Activated T-helper 1 cell treated with anti-CD3 and anti-CD28 coated beads, Interleukin-12 subunit alpha, Interleukin-12 subunit beta, Interleukin-2, Interleukin-4 antibody, amounts not matched to agents 30 ng/mL and 10 ng/mL and 1 ng/mL, durations not matched to agents 14 hours and 24 hours and 36 hours (primary cell): ENCODE measurements at regions of chrX and their contacts with region 1.

Region 1: DNA sequence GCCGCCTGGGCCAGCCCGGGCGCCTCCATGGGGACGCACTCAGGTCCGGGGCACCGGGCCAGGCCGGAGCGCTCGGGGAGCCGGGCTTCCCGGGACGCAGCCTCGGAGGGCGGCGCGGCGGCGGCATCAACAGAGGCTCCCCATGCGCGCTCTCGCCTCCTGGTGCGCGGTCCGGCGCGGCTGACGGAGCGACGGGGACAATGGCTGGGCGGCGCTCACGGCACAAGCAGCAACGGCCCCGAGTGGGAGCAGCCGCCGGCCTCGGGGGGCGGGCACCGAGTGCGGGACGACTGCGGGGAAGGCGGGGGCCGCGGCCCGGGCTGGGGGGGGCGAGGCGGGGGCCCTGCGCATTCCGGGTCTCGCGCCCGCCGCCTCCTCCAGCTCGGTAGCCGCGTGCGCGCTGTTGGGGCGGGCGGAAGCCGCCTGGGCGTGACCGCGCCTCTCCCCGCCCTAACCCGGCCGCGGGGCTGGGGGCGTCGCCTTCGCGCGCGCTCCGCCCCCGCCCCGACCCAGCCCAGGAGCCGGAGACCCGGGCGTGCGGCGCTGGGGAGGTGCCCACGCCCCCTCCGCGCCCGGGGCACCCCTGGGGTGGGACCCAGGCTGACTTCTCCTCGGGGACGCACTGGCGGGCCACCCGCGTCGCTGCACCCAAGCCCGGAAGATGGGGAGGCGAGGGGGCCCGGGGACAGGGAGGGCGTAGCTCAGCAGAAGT is at the start of gene PRKX:
- DNase-seq: peak; percentile 71
- H3K4me3 Mint-ChIP-seq: peak within 1 kb of the TSS; percentile 100
- H3K27ac Mint-ChIP-seq: peak within 1 kb of the TSS; percentile 99
- H3K4me1 Mint-ChIP-seq: peaks cover 2% of the 10 kb centered on the region
- H3K27me3 Mint-ChIP-seq: no peaks in the 10 kb centered on the region
- total RNA-seq, gene PRKX: 72.2 and 80.9 TPM in 2 replicates

Region 2: DNA sequence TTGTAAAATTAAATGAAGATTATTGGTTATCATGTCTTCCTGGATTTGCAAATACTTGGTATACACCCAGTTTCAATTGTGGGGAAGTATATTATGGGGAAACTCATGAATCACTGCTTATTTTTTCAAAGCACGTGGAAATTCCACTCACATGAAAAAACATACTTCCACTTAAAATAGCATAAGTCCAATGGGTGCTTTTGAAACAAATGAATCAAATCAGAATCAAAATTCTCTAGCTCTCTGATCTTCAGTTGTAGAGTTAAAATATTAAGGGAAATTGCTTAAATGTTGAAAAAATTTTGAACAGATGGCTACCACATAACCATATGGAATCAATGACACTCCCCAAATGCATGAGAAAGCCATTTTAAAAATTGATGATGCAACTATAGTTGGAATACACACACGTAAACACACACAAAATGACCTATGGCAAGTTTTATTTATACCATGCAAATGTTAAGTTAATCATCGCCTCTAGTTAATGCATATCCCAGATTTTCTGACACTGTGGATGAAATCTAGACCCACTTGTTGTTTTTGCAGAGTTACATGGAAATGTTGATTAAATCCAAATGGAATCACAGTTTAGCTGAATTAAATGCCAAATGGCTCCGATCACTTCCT is 579.0 kb before region 1 on chrX:
- intact Hi-C with region 1: no loop called
- DNase-seq: no peak
- H3K4me3 Mint-ChIP-seq: no peak overlapping the region
- H3K27ac Mint-ChIP-seq: no peak overlapping the region
- H3K4me1 Mint-ChIP-seq: no peaks in the 10 kb centered on the region
- H3K27me3 Mint-ChIP-seq: no peaks in the 10 kb centered on the region

Region 3: GRCh38 chrX:3589474-3589873 is 123.9 kb before region 1 on chrX:
- intact Hi-C with region 1: no loop called
- DNase-seq: no peak
- H3K4me3 Mint-ChIP-seq: no peak overlapping the region
- H3K27ac Mint-ChIP-seq: no peak overlapping the region
- H3K4me1 Mint-ChIP-seq: peaks cover 3% of the 10 kb centered on the region
- H3K27me3 Mint-ChIP-seq: no peaks in the 10 kb centered on the region

Region 4: DNA sequence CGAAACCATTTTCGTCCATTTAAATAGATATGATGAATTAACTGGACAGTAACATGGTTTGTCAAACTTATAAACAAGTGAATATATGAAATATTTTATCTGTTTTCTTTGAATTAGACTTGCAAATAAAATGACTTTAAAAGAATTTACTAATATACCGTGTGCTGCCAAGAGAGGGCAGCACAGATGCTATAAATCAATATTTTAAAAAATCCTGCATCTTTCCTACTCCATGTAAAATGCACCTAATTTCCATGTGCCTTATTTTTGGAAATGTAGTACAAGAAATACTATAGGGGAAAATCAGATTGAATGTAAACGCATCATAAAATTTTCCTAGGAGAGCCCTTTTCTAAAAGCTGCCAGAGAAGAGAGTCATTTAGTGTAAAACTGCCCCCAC is 62.1 kb before region 1 on chrX:
- intact Hi-C with region 1: loop called (anchors 2 kb)
- DNase-seq: no peak
- H3K4me3 Mint-ChIP-seq: no peak overlapping the region
- H3K27ac Mint-ChIP-seq: no peak overlapping the region
- H3K4me1 Mint-ChIP-seq: no peaks in the 10 kb centered on the region
- H3K27me3 Mint-ChIP-seq: no peaks in the 10 kb centered on the region

Region 5: GRCh38 chrX:3699821-3700381 is 13.5 kb before region 1 on chrX:
- intact Hi-C with region 1: loop called (anchors 1 kb)
- DNase-seq: no peak
- H3K4me3 Mint-ChIP-seq: peak overlapping the region; percentile 85
- H3K27ac Mint-ChIP-seq: peak overlapping the region; percentile 90
- H3K4me1 Mint-ChIP-seq: peaks cover 61% of the 10 kb centered on the region
- H3K27me3 Mint-ChIP-seq: no peaks in the 10 kb centered on the region

Region 6: GRCh38 chrX:3738509-3738908 is 25.1 kb after region 1 on chrX:
- intact Hi-C with region 1: loop called (anchors 2 kb)
- DNase-seq: no peak
- H3K4me3 Mint-ChIP-seq: no peak overlapping the region
- H3K27ac Mint-ChIP-seq: peak overlapping the region; percentile 95
- H3K4me1 Mint-ChIP-seq: peaks cover 25% of the 10 kb centered on the region
- H3K27me3 Mint-ChIP-seq: no peaks in the 10 kb centered on the region